K562 (cell line): ENCODE measurements at regions of chr6 and their contacts with region 1.

Region 1: GRCh38 chr6:138403801-138404661 is at the start of gene HEBP2:
- DNase-seq: peak; percentile 96 to 98 (median 98)
- ATAC-seq: peak; percentile 95
- H3K4me3 ChIP-seq: peak within 1 kb of the TSS; percentile 58
- H3K27ac ChIP-seq: peak within 1 kb of the TSS; percentile 87
- H3K4me1 ChIP-seq: peaks cover 10 to 23% of the 10 kb centered on the region in 2 experiments
- H3K27me3 ChIP-seq: no peaks in the 10 kb centered on the region
- CTCF ChIP-seq: peak; percentile 51 to 59 (median 53)
- EP300 ChIP-seq: peak; percentile 45; the same call in 1 of the 2 replicates
- POLR2A ChIP-seq: peak; percentile 88
- RAD21 ChIP-seq: peak; percentile 65 to 85
- polyA plus RNA-seq, gene HEBP2: 8.5 to 14.5 TPM

Region 2: DNA sequence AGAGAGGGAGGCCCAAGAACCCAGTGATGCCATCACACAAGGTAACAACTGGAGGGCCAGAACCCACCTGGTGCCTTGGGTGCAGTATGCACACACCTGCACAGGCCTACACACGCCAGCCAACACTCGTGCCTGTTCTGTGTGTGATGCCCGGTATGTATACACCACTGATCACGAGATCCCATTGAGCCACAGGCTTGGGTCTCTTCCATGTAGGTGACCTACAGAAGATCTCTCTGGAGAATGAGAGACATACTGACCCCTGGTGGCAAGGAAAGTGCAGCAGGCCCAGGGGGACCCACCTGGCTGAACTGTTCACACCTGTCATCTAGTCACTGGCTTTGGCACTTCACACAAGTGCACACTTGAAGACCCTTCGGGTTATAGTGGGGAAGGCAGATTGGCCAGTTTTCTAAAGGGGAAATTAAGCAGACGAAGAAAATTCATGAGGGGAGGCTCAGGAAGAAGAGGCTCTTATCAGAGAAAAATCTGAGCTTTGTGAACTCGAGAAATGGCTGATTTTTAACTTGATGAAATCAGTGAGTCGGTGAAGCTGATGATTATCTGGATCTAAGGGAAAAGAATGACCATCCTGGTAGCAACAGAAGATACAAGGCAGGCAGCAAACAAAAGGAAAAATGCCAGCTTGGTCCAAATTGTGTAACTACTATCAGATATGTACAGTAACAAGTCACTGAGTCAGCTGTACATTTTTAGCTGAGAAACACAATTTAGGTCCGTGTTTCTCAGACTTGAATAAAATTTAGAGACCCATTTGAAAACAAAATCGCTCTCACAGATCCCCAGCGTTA is 116.7 kb before region 1 on chr6:
- CTCF ChIA-PET with region 1: no interaction called
- POLR2A ChIA-PET with region 1: no interaction called
- in situ Hi-C with region 1: no loop called
- intact Hi-C with region 1: loop called (anchors 5 kb)
- DNase-seq: peak; percentile 49 to 60 (median 53)
- ATAC-seq: peak; percentile 80
- H3K4me3 ChIP-seq: no peak overlapping the region
- H3K27ac ChIP-seq: no peak overlapping the region
- H3K4me1 ChIP-seq: no peaks in the 10 kb centered on the region
- H3K27me3 ChIP-seq: peaks cover 27 to 46% of the 10 kb centered on the region in 2 experiments
- CTCF ChIP-seq: peak; percentile 56 to 82 (median 61)
- EP300 ChIP-seq: no peak
- POLR2A ChIP-seq: no peak
- RAD21 ChIP-seq: peak; percentile 29 to 37; a peak in 1 of 4 replicates